Colonic mucosa (tissue), 4 donors: ENCODE measurements at regions of chr1 and their contacts with region 1.

Region 1: GRCh38 chr1:55893155-55893554 is 678.0 kb upstream of the USP24 start:
- DNase-seq: no peak
- H3K4me3 ChIP-seq: no peak overlapping the region
- H3K27ac ChIP-seq: no peak overlapping the region
- H3K4me1 ChIP-seq: no peaks in the 10 kb centered on the region
- H3K27me3 ChIP-seq: no peaks in the 10 kb centered on the region
- CTCF ChIP-seq: peak; percentile 41

Region 2: DNA sequence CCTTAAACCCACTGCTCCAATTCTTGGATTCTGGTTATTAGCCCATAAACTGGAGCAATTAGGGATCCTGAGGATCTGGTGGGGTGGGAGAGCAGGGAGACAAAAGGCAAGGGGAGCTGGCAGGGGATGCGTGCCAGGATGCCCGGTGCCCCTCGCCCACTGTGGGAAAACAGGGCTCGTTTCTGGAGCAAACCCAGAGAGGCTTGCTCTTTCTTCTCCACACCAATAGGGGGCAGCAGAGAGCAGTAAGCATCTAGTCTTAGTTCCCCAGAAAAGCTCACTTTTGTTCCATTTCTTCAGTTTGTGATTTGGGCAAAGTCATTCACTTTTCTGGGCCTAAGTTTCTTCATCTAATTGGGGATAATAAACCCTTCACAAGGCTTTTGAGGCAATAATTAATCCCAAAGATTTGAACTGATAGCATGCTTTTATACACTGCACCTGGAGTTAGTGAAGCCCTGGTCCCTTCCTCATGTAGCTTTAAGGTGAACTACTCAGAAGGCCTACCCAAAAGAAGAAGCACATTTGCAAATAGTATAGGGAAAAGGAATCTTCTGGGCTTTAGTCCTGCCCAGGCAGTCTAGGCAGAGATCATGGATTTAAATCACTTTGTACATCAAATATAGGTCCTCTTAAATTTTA is 517.4 kb before region 1 on chr1:
- intact Hi-C with region 1: loop called (anchors 10 kb)
- DNase-seq: peak; percentile 55
- H3K4me3 ChIP-seq: no peak overlapping the region
- H3K27ac ChIP-seq: no peak overlapping the region
- H3K4me1 ChIP-seq: no peaks in the 10 kb centered on the region
- H3K27me3 ChIP-seq: no peaks in the 10 kb centered on the region
- CTCF ChIP-seq: peak; percentile 91

Region 3: DNA sequence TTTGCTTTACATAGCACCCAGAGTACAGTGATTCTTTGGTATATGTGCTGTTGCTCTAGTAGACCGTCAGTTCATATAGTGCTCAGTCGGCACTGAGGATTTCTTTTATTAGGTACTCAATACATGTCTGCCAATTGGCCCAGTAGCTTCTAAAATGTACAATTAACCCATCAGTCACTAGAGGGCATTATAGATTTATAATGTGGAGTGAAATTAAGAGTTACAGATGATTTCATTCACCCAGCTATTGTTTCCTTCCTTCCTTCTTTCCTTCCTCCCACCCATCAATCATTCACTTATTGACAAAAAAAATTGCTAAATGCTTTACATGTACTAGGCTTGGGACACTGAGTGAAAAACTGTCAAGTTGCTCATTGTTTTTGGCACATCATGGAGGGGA is 414.4 kb before region 1 on chr1:
- intact Hi-C with region 1: loop called (anchors 2 kb)
- DNase-seq: no peak
- H3K4me3 ChIP-seq: no peak overlapping the region
- H3K27ac ChIP-seq: no peak overlapping the region
- H3K4me1 ChIP-seq: peaks cover 3% of the 10 kb centered on the region
- H3K27me3 ChIP-seq: no peaks in the 10 kb centered on the region
- CTCF ChIP-seq: no peak

Region 4: DNA sequence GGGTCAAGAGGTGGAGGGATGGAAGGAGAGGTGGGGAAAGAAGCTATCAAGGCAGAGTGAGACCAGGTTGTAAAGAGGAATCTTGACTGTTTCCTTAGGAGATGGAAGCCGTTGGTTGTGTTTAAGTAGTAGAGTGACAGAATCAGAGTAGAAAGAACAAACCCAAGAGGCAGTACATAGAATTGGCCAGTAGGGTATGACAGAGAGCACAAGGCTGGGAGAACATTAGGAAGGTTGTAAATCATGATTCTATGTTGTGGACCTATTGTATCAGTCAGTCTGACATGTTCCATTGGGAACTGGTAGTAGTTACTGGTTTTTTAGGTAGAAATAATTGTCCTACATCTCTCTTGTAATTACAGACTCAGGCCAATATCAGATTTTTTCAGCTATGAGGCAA is 191.1 kb before region 1 on chr1:
- intact Hi-C with region 1: loop called (anchors 5 kb)
- DNase-seq: peak; percentile 31
- H3K4me3 ChIP-seq: no peak overlapping the region
- H3K27ac ChIP-seq: no peak overlapping the region
- H3K4me1 ChIP-seq: no peaks in the 10 kb centered on the region
- H3K27me3 ChIP-seq: no peaks in the 10 kb centered on the region
- CTCF ChIP-seq: peak; percentile 59

Region 5: DNA sequence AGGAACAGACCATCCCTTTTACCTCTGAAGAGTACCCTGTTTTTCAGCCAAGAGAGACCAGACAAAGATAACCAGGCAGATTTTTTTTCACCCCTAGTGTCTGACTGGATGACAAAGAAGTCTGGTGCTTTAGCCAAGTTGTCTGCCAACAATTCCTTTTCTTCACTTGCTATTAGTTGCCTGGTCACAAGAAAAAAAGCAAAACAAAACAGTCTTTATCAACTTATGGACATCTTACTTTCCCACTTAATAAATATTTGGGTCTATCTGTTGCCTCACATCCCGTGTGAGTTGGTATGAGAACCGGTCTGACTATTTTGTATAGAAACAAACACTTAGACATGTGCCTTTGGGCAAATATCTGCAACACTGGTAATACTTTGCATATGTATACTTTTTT is 23.3 kb after region 1 on chr1:
- intact Hi-C with region 1: no loop called
- DNase-seq: no peak
- H3K4me3 ChIP-seq: no peak overlapping the region
- H3K27ac ChIP-seq: no peak overlapping the region
- H3K4me1 ChIP-seq: no peaks in the 10 kb centered on the region
- H3K27me3 ChIP-seq: no peaks in the 10 kb centered on the region
- CTCF ChIP-seq: no peak